A549 (cell line): ENCODE measurements at regions of chr7 and their contacts with region 1.

Region 1: GRCh38 chr7:129218514-129219062 is 6.2 kb upstream of the AHCYL2 start:
- DNase-seq: peak; percentile 81 to 93
- ATAC-seq: peak; percentile 95 to 96
- H3K4me3 ChIP-seq: no peak overlapping the region
- H3K27ac ChIP-seq: no peak overlapping the region
- H3K4me1 ChIP-seq: 0 out of 3 replicates have a peak, but pooled peaks cover 3% of the 10 kb centered on the region
- CTCF ChIP-seq: peak; percentile 94
- EP300 ChIP-seq: no peak
- POLR2A ChIP-seq: no peak
- RAD21 ChIP-seq: peak; percentile 96 to 98

Region 2: GRCh38 chr7:128974241-128974934 is 244.2 kb before region 1 on chr7:
- CTCF ChIA-PET with region 1: no interaction called
- POLR2A ChIA-PET with region 1: no interaction called
- DNase-seq: peak in 1 of 2 experiments; percentile 22
- ATAC-seq: peak; percentile 54; a peak in 3 of 6 replicates
- H3K4me3 ChIP-seq: no peak overlapping the region
- H3K27ac ChIP-seq: no peak overlapping the region
- H3K4me1 ChIP-seq: 0 out of 3 replicates have a peak, but pooled peaks cover 7% of the 10 kb centered on the region
- CTCF ChIP-seq: no peak
- EP300 ChIP-seq: no peak
- POLR2A ChIP-seq: no peak
- RAD21 ChIP-seq: no peak

Region 3: GRCh38 chr7:129203050-129203741 is 15.4 kb before region 1 on chr7:
- CTCF ChIA-PET with region 1: interaction called, 46 read pairs
- POLR2A ChIA-PET with region 1: no interaction called
- DNase-seq: no peak
- ATAC-seq: no peak; a peak in 1 of 6 replicates
- H3K4me3 ChIP-seq: no peak overlapping the region
- H3K27ac ChIP-seq: no peak overlapping the region
- H3K4me1 ChIP-seq: no peaks in the 10 kb centered on the region
- CTCF ChIP-seq: no peak
- EP300 ChIP-seq: no peak
- POLR2A ChIP-seq: no peak
- RAD21 ChIP-seq: no peak

Region 4: GRCh38 chr7:129271500-129272355 is 53.1 kb after region 1 on chr7:
- CTCF ChIA-PET with region 1: interaction called, 21 read pairs
- POLR2A ChIA-PET with region 1: no interaction called
- DNase-seq: peak; percentile 28 to 71
- ATAC-seq: peak in 1 of 2 experiments; percentile 89; a peak in 3 of 6 replicates
- H3K4me3 ChIP-seq: no peak overlapping the region
- H3K27ac ChIP-seq: no peak overlapping the region
- H3K4me1 ChIP-seq: no peaks in the 10 kb centered on the region
- CTCF ChIP-seq: peak; percentile 37
- EP300 ChIP-seq: no peak
- POLR2A ChIP-seq: no peak
- RAD21 ChIP-seq: peak; percentile 42 to 60; a peak in 4 of 5 replicates

Region 5: GRCh38 chr7:129332284-129333035 is 113.9 kb after region 1 on chr7:
- CTCF ChIA-PET with region 1: interaction called, 23 read pairs
- POLR2A ChIA-PET with region 1: no interaction called
- DNase-seq: peak; percentile 21 to 37
- ATAC-seq: peak; percentile 89 to 90
- H3K4me3 ChIP-seq: no peak overlapping the region
- H3K27ac ChIP-seq: peak overlapping the region in 1 of 2 experiments; percentile 53; a peak in 3 of 6 replicates
- H3K4me1 ChIP-seq: peaks cover 16% of the 10 kb centered on the region
- CTCF ChIP-seq: no peak
- EP300 ChIP-seq: no peak
- POLR2A ChIP-seq: no peak
- RAD21 ChIP-seq: no peak

Region 6: DNA sequence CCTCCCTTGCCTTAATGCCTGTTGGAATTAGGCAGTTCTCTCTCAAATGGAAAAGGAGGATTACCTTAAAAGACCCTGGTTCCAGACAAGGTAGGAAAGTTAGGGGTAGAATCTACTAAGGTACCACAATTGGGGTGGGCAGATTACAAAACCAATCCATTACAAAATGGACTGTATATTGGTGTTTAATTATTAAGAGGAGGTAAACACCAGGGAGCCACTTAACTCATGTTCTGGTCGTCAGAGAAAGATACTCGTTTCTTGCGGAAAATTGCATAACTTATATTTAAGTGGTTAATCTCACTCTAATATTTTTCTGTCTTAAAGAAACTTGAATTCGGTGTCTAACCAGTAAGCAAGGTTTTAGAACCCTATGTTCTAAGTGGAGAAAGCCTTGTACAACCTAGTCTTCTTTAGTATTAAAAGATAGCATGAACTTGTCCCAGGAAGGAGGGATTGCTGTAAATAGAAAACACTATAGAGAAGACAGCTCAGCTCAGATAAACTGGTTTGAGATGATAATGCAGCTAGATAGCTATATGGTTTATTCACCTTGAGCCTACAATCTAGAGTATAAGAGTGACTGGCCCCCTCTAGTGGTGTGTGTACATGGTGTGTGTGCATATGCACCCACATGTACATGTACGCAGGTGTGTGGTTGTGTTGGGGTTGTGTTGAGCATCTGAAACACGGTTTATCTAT is 157.6 kb after region 1 on chr7:
- CTCF ChIA-PET with region 1: interaction called, 30 read pairs
- POLR2A ChIA-PET with region 1: no interaction called
- DNase-seq: peak; percentile 61 to 65
- ATAC-seq: peak; percentile 91 to 97
- H3K4me3 ChIP-seq: no peak overlapping the region
- H3K27ac ChIP-seq: no peak overlapping the region
- H3K4me1 ChIP-seq: peaks cover 3% of the 10 kb centered on the region; the same call in 1 of the 3 replicates
- CTCF ChIP-seq: peak; percentile 65
- EP300 ChIP-seq: no peak
- POLR2A ChIP-seq: no peak
- RAD21 ChIP-seq: peak in 1 of 2 experiments; percentile 49; a peak in 2 of 5 replicates

Region 7: GRCh38 chr7:129480674-129481365 is 262.2 kb after region 1 on chr7:
- CTCF ChIA-PET with region 1: interaction called, 14 read pairs
- POLR2A ChIA-PET with region 1: no interaction called
- DNase-seq: no peak
- ATAC-seq: no peak
- H3K4me3 ChIP-seq: no peak overlapping the region
- H3K27ac ChIP-seq: no peak overlapping the region
- H3K4me1 ChIP-seq: no peaks in the 10 kb centered on the region
- CTCF ChIP-seq: no peak
- EP300 ChIP-seq: no peak
- POLR2A ChIP-seq: no peak
- RAD21 ChIP-seq: no peak